Prostate gland (tissue), 2 donors: ENCODE measurements at regions of chr13 and their contacts with region 1.

Region 1: DNA sequence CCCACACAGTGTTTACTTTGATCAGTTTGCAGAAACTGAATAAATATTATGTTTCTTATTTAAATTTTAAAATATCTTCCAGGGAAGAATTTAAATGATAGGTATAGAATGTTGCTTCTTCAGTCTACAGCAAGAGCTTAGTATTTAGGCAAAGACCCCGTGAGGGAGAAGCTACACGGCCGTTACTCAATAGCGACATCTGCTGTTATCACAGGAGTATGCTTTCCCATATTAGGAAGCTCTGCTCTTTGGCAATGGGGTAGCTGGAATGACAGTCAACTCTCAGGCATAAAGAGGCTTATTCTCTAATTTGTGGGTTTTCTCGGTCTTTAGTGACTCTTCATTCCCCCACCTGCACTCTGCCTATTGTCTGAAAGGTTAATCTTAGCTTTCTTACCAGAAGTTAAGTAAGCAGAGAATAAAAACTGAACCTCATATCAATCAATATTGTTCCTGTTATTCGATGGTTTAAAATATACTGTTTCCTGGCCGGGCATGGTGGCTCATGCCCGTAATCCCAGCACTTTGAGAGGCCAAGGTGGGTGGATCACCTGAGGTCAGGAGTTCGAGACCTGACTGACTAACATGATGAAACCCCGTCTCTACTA is 13.2 kb upstream of the LHFPL6 start:
- DNase-seq: peak; percentile 47
- H3K4me3 ChIP-seq: no peak overlapping the region
- H3K27ac ChIP-seq: no peak overlapping the region
- H3K4me1 ChIP-seq: no peaks in the 10 kb centered on the region
- H3K27me3 ChIP-seq: no peaks in the 10 kb centered on the region
- CTCF ChIP-seq: peak; percentile 47 to 71 (median 69)
- POLR2A ChIP-seq: no peak

Region 2: GRCh38 chr13:39051157-39051556 is 565.0 kb before region 1 on chr13:
- intact Hi-C with region 1: loop called (anchors 5 kb)
- DNase-seq: no peak
- H3K4me3 ChIP-seq: no peak overlapping the region
- H3K27ac ChIP-seq: no peak overlapping the region
- H3K4me1 ChIP-seq: no peaks in the 10 kb centered on the region
- H3K27me3 ChIP-seq: no peaks in the 10 kb centered on the region
- CTCF ChIP-seq: peak in 2 of 4 experiments; percentile 11 to 30
- POLR2A ChIP-seq: no peak

Region 3: DNA sequence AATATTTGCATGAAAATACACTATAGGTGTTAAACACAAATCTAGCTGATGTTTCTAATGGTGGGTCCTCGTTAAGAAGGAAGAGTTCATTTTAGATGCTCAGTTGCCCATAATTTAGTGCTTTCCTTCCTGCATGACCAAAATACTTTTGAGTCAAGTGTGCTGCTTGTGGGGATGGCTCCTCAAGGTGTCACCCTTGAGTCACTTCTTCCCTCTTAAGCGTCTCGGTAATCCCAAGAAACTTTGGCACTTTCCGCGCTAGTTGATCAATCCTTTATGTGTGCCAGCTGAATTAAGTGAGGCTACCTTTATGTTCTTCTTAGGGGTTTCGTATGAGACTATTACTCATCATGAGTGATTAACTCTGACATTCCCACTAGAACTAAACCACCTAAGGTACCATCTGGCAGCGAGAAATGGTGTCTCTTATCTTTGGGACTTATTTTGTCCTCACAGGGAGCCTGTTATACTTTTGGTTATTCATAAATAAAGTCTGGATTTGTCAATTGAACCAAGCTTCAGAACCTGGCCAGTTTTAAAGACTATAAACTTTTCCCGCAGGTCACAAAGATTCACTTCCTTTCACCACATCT is 471.2 kb before region 1 on chr13:
- intact Hi-C with region 1: loop called (anchors 5 kb)
- DNase-seq: peak; percentile 42
- H3K4me3 ChIP-seq: no peak overlapping the region
- H3K27ac ChIP-seq: no peak overlapping the region
- H3K4me1 ChIP-seq: no peaks in the 10 kb centered on the region
- H3K27me3 ChIP-seq: no peaks in the 10 kb centered on the region
- CTCF ChIP-seq: peak in 3 of 4 experiments; percentile 33 to 66 (median 62)
- POLR2A ChIP-seq: no peak

Region 4: GRCh38 chr13:39263033-39263432 is 353.2 kb before region 1 on chr13:
- intact Hi-C with region 1: loop called (anchors 5 kb)
- DNase-seq: peak; percentile 9
- H3K4me3 ChIP-seq: no peak overlapping the region
- H3K27ac ChIP-seq: no peak overlapping the region
- H3K4me1 ChIP-seq: no peaks in the 10 kb centered on the region
- H3K27me3 ChIP-seq: no peaks in the 10 kb centered on the region
- CTCF ChIP-seq: peak; percentile 30 to 56 (median 51)
- POLR2A ChIP-seq: no peak

Region 5: GRCh38 chr13:39433651-39434050 is 182.5 kb before region 1 on chr13:
- intact Hi-C with region 1: no loop called
- DNase-seq: no peak
- H3K4me3 ChIP-seq: no peak overlapping the region
- H3K27ac ChIP-seq: no peak overlapping the region
- H3K4me1 ChIP-seq: no peaks in the 10 kb centered on the region
- H3K27me3 ChIP-seq: no peaks in the 10 kb centered on the region
- CTCF ChIP-seq: no peak
- POLR2A ChIP-seq: no peak

Region 6: GRCh38 chr13:39676315-39676876 is 60.2 kb after region 1 on chr13:
- intact Hi-C with region 1: no loop called
- DNase-seq: peak; percentile 28
- H3K4me3 ChIP-seq: no peak overlapping the region
- H3K27ac ChIP-seq: no peak overlapping the region
- H3K4me1 ChIP-seq: no peaks in the 10 kb centered on the region
- H3K27me3 ChIP-seq: no peaks in the 10 kb centered on the region
- CTCF ChIP-seq: peak in 3 of 4 experiments; percentile 27 to 53 (median 43)
- POLR2A ChIP-seq: no peak

Region 7: GRCh38 chr13:39942552-39943273 is 326.5 kb after region 1 on chr13:
- intact Hi-C with region 1: no loop called
- DNase-seq: peak; percentile 59
- H3K4me3 ChIP-seq: no peak overlapping the region
- H3K27ac ChIP-seq: no peak overlapping the region
- H3K4me1 ChIP-seq: no peaks in the 10 kb centered on the region
- H3K27me3 ChIP-seq: no peaks in the 10 kb centered on the region
- CTCF ChIP-seq: peak; percentile 55 to 85 (median 74)
- POLR2A ChIP-seq: no peak

Region 8: GRCh38 chr13:40390401-40390916 is 774.3 kb after region 1 on chr13:
- intact Hi-C with region 1: no loop called
- DNase-seq: no peak
- H3K4me3 ChIP-seq: no peak overlapping the region
- H3K27ac ChIP-seq: no peak overlapping the region
- H3K4me1 ChIP-seq: no peaks in the 10 kb centered on the region
- H3K27me3 ChIP-seq: no peaks in the 10 kb centered on the region
- CTCF ChIP-seq: no peak
- POLR2A ChIP-seq: no peak